Spleen (tissue), 13 donors: ENCODE measurements at regions of chr11 and their contacts with region 1.

Region 1: GRCh38 chr11:74520927-74521665 is 27.6 kb upstream of the LIPT2 start:
- DNase-seq: no peak
- H3K4me3 ChIP-seq: no peak overlapping the region
- H3K27ac ChIP-seq: peak overlapping the region in 5 of 8 donors; percentile 1 to 59 (median 43)
- H3K4me1 ChIP-seq: peaks cover 0 to 13% (median 0%) of the 10 kb centered on the region in 6 donors
- H3K27me3 ChIP-seq: peaks cover 0 to 4% (median 0%) of the 10 kb centered on the region in 7 donors
- CTCF ChIP-seq: peak in 1 of 11 experiments; percentile 16
- POLR2A ChIP-seq: no peak

Region 2: DNA sequence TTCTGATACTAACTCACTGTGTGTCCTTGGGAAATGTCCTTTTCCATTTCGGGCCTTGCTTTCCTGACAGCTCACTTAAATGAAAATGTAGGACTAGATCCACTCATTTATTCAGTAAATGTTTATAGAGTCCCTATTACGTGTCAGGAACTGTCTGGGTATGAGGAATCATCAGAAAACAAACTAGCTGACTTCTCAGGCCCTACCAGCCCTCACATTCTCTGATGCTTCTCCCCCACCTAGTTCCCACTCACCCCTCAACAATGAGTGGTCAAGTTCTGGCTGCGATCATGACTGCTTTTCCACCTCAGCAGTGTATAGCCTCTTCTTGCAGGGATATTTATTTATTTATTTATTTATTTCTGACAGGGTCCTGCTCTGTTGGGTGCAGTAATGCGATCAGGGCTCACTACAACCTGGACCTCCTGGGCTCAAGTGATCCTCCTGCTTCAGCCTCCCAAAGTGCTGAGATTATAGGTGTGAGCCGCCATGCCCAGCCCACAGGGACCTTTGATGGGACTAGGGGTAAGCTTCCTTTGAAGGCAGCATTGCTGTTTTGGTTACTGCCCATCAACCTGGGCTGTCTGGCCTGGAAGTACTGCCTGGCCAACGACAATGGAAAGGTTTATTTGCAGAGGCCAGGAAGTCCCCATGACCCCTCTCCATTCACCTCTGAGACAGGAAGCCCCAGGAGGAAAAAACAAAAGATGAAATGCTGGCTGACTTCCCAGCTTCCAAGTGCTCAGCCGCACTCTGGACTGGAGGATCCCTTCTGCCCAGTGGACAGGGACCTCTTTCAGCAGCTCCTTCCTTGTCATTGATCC is 38.2 kb after region 1 on chr11:
- intact Hi-C with region 1: loop called (anchors 5 kb)
- DNase-seq: no peak
- H3K4me3 ChIP-seq: no peak overlapping the region
- H3K27ac ChIP-seq: peak overlapping the region in 1 of 8 donors; percentile 28
- H3K4me1 ChIP-seq: peaks cover 0 to 8% (median 0%) of the 10 kb centered on the region in 6 donors
- H3K27me3 ChIP-seq: peaks cover 0 to 7% (median 0%) of the 10 kb centered on the region in 7 donors
- CTCF ChIP-seq: no peak
- POLR2A ChIP-seq: no peak

Region 3: DNA sequence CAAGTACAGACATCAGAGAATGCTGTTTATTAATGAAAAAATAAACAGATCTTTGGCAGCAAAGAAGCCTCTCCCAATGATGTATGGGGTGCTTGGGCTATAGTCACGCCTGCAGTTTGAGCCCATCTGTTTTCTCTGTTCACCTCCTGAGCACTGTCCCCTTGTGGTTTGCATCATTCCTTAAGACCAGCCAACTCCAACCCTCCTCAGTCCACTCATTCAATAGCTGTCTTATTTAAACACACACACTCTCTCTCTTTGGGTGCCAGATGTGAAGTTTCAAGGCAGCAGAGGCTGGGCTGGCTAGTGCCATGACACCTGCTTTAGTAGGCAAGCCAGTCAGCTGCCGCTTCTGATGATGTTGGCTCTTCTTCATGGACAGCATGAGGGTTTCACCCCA is 129.4 kb after region 1 on chr11:
- intact Hi-C with region 1: no loop called
- DNase-seq: no peak
- H3K4me3 ChIP-seq: no peak overlapping the region
- H3K27ac ChIP-seq: no peak overlapping the region
- H3K4me1 ChIP-seq: no peaks in the 10 kb centered on the region
- H3K27me3 ChIP-seq: no peaks in the 10 kb centered on the region
- CTCF ChIP-seq: no peak
- POLR2A ChIP-seq: no peak